B cell (primary cell): ENCODE measurements at regions of chr1 and their contacts with region 1.

Region 1: GRCh38 chr1:212994926-212995325 is 20.7 kb downstream of the ANGEL2 start:
- DNase-seq: no peak
- ATAC-seq: no peak
- H3K4me3 ChIP-seq: no peak overlapping the region
- H3K4me3 Mint-ChIP-seq: no peak overlapping the region
- H3K27ac ChIP-seq: no peak overlapping the region
- H3K27ac Mint-ChIP-seq: no peak overlapping the region
- H3K4me1 ChIP-seq: no peaks in the 10 kb centered on the region
- H3K4me1 Mint-ChIP-seq: peaks cover 2% of the 10 kb centered on the region
- H3K27me3 ChIP-seq: no peaks in the 10 kb centered on the region
- H3K27me3 Mint-ChIP-seq: no peaks in the 10 kb centered on the region
- CTCF ChIP-seq: no peak

Region 2: GRCh38 chr1:212665241-212666115 is 329.4 kb before region 1 on chr1:
- CTCF ChIA-PET with region 1: interaction called, 76 read pairs
- POLR2A ChIA-PET with region 1: no interaction called
- intact Hi-C with region 1: loop called (anchors 1 kb)
- DNase-seq: peak; percentile 85
- ATAC-seq: peak; percentile 93
- H3K4me3 ChIP-seq: peak overlapping the region in 4 of 5 experiments; percentile 24 to 58 (median 48)
- H3K4me3 Mint-ChIP-seq: peak overlapping the region; percentile 79
- H3K27ac ChIP-seq: no peak overlapping the region
- H3K27ac Mint-ChIP-seq: no peak overlapping the region
- H3K4me1 ChIP-seq: peaks cover 6 to 22% of the 10 kb centered on the region in 2 donors
- H3K4me1 Mint-ChIP-seq: peaks cover 16% of the 10 kb centered on the region
- H3K27me3 ChIP-seq: peaks cover 0 to 6% (median 0%) of the 10 kb centered on the region in 4 experiments
- H3K27me3 Mint-ChIP-seq: no peaks in the 10 kb centered on the region
- CTCF ChIP-seq: peak; percentile 93

Region 3: DNA sequence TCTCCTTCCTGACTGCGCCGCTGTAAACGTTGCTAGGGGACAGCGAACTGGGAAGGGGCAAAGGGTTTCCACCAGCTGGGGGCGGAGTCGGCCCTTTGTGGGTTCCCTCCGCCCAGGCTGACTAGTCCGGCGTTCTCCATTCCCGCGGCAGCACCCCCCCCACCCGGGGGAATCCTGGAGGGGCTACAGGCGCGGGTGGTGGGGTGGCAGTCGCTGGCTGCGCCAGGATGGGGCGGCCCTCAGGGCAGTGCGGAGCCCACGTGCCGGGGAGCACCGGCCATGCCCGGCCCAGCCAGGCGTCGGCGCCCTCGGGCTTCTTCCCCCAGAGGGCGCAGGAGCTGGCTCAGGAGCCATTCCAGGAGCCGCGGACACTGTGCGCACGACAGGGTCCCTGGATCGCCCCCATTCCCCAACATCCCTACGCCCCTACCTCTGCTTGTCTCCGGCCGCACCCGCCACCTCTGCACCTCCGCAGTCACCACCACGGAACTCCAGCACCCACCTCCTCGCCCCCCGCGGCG is 295.8 kb before region 1 on chr1:
- CTCF ChIA-PET with region 1: interaction called, 5 read pairs
- POLR2A ChIA-PET with region 1: no interaction called
- intact Hi-C with region 1: loop called (anchors 1 kb)
- DNase-seq: peak; percentile 69
- ATAC-seq: peak; percentile 65
- H3K4me3 ChIP-seq: peak overlapping the region; percentile 34 to 70 (median 65)
- H3K4me3 Mint-ChIP-seq: peak overlapping the region; percentile 92
- H3K27ac ChIP-seq: no peak overlapping the region
- H3K27ac Mint-ChIP-seq: peak overlapping the region; percentile 27
- H3K4me1 ChIP-seq: peaks cover 31 to 36% of the 10 kb centered on the region in 2 donors
- H3K4me1 Mint-ChIP-seq: peaks cover 39% of the 10 kb centered on the region
- H3K27me3 ChIP-seq: peaks cover 0 to 14% (median 3%) of the 10 kb centered on the region in 4 experiments
- H3K27me3 Mint-ChIP-seq: peaks cover 4% of the 10 kb centered on the region
- CTCF ChIP-seq: peak; percentile 69

Region 4: DNA sequence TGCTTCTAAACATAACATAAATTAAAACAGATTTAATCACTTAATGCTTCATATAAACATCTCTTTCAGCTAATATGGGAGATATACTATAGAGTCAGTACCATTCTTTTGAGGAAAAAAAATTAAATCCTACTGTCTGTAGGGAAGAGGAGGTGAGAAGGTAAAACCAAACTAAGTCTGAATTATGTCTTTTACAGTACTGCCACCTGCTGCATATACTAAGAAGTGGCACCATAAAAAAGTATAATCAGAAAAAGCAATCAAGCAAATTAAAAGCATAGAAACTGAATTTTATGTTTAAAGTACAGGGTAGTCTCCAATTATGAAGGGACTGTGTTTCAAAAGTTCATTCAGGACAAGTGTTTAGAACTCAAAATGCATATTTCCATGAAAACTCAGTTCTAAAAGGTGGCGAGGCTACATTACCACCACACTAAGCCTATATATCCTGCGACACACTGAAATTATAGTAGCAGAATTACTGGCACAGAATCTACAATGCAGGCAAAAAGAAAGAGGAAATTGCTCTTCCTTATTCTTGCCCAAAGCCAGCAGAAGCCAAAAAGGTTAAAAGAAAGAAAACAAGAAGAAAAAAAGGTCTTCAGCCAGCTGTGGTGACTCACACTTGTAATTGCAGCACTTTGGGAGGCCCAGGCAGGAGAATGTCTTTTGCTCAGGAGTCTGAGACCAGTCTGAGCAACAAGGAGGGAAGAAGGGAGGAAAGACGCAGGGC is 212.3 kb before region 1 on chr1:
- CTCF ChIA-PET with region 1: interaction called, 8 read pairs
- POLR2A ChIA-PET with region 1: no interaction called
- intact Hi-C with region 1: loop called (anchors 5 kb)
- DNase-seq: peak; percentile 54
- ATAC-seq: peak; percentile 51
- H3K4me3 ChIP-seq: no peak overlapping the region
- H3K4me3 Mint-ChIP-seq: no peak overlapping the region
- H3K27ac ChIP-seq: no peak overlapping the region
- H3K27ac Mint-ChIP-seq: no peak overlapping the region
- H3K4me1 ChIP-seq: no peaks in the 10 kb centered on the region
- H3K4me1 Mint-ChIP-seq: no peaks in the 10 kb centered on the region
- H3K27me3 ChIP-seq: no peaks in the 10 kb centered on the region
- H3K27me3 Mint-ChIP-seq: no peaks in the 10 kb centered on the region
- CTCF ChIP-seq: peak; percentile 87

Region 5: DNA sequence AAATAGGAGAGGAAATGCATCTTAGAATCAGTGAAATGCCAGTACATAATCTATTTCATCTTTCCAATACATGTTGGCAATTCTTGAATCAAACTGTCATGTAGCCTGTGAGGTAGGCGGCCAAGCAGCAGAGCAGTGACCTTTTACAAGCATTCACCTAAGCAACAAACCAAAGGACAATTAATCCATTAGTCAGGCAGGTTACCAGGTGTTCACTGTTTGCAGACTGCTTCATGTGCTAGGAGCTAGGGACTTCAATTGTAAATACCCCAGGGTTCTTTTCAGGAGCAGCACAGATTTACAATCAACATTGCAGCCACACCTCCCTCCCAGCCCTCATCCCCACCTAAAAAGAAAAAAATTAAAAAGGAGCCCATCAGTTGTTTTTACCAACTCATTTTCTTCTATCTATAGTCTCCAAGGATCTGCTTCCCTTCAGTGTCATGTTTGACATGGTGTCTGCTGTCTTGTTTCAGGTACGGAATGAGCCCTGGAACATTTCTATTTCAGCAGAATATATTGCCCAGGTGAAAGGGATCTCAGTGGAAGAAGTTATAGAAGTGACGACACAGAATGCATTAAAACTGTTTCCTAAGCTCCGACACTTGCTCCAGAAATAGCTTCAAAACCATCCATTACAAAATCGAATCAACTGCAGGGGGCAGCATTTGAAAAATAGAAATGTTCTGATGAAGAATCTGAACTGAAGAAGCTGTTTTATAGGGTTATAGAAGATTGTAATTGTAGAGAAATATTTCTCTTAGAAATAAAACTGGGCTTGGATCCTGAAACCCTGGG is 180.2 kb before region 1 on chr1:
- CTCF ChIA-PET with region 1: interaction called, 10 read pairs
- POLR2A ChIA-PET with region 1: no interaction called
- intact Hi-C with region 1: no loop called
- DNase-seq: peak; percentile 28
- ATAC-seq: no peak
- H3K4me3 ChIP-seq: no peak overlapping the region
- H3K4me3 Mint-ChIP-seq: no peak overlapping the region
- H3K27ac ChIP-seq: no peak overlapping the region
- H3K27ac Mint-ChIP-seq: no peak overlapping the region
- H3K4me1 ChIP-seq: peaks cover 6 to 7% of the 10 kb centered on the region in 2 donors
- H3K4me1 Mint-ChIP-seq: peaks cover 6% of the 10 kb centered on the region
- H3K27me3 ChIP-seq: no peaks in the 10 kb centered on the region
- H3K27me3 Mint-ChIP-seq: no peaks in the 10 kb centered on the region
- CTCF ChIP-seq: peak; percentile 16

Region 6: GRCh38 chr1:212857992-212858460 is 136.9 kb before region 1 on chr1 and contains the start of gene FLVCR1:
- CTCF ChIA-PET with region 1: interaction called, 5 read pairs
- POLR2A ChIA-PET with region 1: no interaction called
- intact Hi-C with region 1: loop called (anchors 1 kb)
- DNase-seq: peak; percentile 93
- ATAC-seq: peak; percentile 98
- H3K4me3 ChIP-seq: peak within 1 kb of the TSS; percentile 71 to 96 (median 82)
- H3K4me3 Mint-ChIP-seq: peak within 1 kb of the TSS; percentile 95
- H3K27ac ChIP-seq: peak within 1 kb of the TSS; percentile 51 to 85
- H3K27ac Mint-ChIP-seq: peak within 1 kb of the TSS; percentile 96
- H3K4me1 ChIP-seq: peaks cover 25 to 32% of the 10 kb centered on the region in 2 donors
- H3K4me1 Mint-ChIP-seq: peaks cover 22% of the 10 kb centered on the region
- H3K27me3 ChIP-seq: no peaks in the 10 kb centered on the region
- H3K27me3 Mint-ChIP-seq: no peaks in the 10 kb centered on the region
- CTCF ChIP-seq: no peak
- total RNA-seq, gene FLVCR1: 19.2 and 19.7 TPM in 2 replicates